Endothelial cell of umbilical vein (primary cell): ENCODE measurements at regions of chr11 and their contacts with region 1.

Region 1: GRCh38 chr11:67317205-67317887 is 14.0 kb downstream of the SSH3 start:
- DNase-seq: peak; percentile 96
- H3K4me3 ChIP-seq: peak overlapping the region; percentile 22 to 75 (median 60)
- H3K27ac ChIP-seq: peak overlapping the region; percentile 34
- H3K4me1 ChIP-seq: peaks cover 6% of the 10 kb centered on the region
- H3K27me3 ChIP-seq: no peaks in the 10 kb centered on the region
- CTCF ChIP-seq: peak; percentile 96 to 97
- POLR2A ChIP-seq: peak; percentile 87

Region 2: GRCh38 chr11:67239783-67240575 is 77.4 kb before region 1 on chr11:
- CTCF ChIA-PET with region 1: interaction called, 18 read pairs
- POLR2A ChIA-PET with region 1: no interaction called
- dilution Hi-C with region 1: no loop called
- intact Hi-C with region 1: no loop called
- DNase-seq: peak; percentile 100
- H3K4me3 ChIP-seq: peak overlapping the region; percentile 78 to 90 (median 81)
- H3K27ac ChIP-seq: peak overlapping the region; percentile 83
- H3K4me1 ChIP-seq: peaks cover 23% of the 10 kb centered on the region
- H3K27me3 ChIP-seq: no peaks in the 10 kb centered on the region
- CTCF ChIP-seq: peak in 1 of 2 donors; percentile 9
- POLR2A ChIP-seq: peak; percentile 99

Region 3: GRCh38 chr11:67265633-67266423 is 51.5 kb before region 1 on chr11:
- CTCF ChIA-PET with region 1: interaction called, 151 read pairs
- POLR2A ChIA-PET with region 1: interaction called, 4 read pairs
- dilution Hi-C with region 1: no loop called
- intact Hi-C with region 1: loop called (anchors 1 kb)
- DNase-seq: peak; percentile 45
- H3K4me3 ChIP-seq: no peak overlapping the region
- H3K27ac ChIP-seq: no peak overlapping the region
- H3K4me1 ChIP-seq: peaks cover 37% of the 10 kb centered on the region
- H3K27me3 ChIP-seq: no peaks in the 10 kb centered on the region
- CTCF ChIP-seq: peak; percentile 62 to 79
- POLR2A ChIP-seq: no peak

Region 4: GRCh38 chr11:67277231-67277961 is 40.0 kb before region 1 on chr11:
- CTCF ChIA-PET with region 1: interaction called, 13 read pairs
- POLR2A ChIA-PET with region 1: interaction called, 4 read pairs
- dilution Hi-C with region 1: no loop called
- intact Hi-C with region 1: loop called (anchors 1 kb)
- DNase-seq: peak; percentile 88
- H3K4me3 ChIP-seq: no peak overlapping the region
- H3K27ac ChIP-seq: peak overlapping the region; percentile 76
- H3K4me1 ChIP-seq: peaks cover 17% of the 10 kb centered on the region
- H3K27me3 ChIP-seq: no peaks in the 10 kb centered on the region
- CTCF ChIP-seq: no peak
- POLR2A ChIP-seq: no peak

Region 5: GRCh38 chr11:67303132-67303834 is 14.1 kb before region 1 on chr11 and contains the start of gene SSH3:
- CTCF ChIA-PET with region 1: interaction called, 18 read pairs
- POLR2A ChIA-PET with region 1: interaction called, 6 read pairs
- dilution Hi-C with region 1: no loop called
- intact Hi-C with region 1: no loop called
- DNase-seq: peak; percentile 55
- H3K4me3 ChIP-seq: peak within 1 kb of the TSS; percentile 62 to 89 (median 74)
- H3K27ac ChIP-seq: no peak within 1 kb of the TSS
- H3K4me1 ChIP-seq: peaks cover 3% of the 10 kb centered on the region
- H3K27me3 ChIP-seq: no peaks in the 10 kb centered on the region
- CTCF ChIP-seq: no peak
- POLR2A ChIP-seq: peak; percentile 51
- total RNA-seq, gene SSH3: 16.5 and 22.5 TPM in 2 replicates

Region 6: DNA sequence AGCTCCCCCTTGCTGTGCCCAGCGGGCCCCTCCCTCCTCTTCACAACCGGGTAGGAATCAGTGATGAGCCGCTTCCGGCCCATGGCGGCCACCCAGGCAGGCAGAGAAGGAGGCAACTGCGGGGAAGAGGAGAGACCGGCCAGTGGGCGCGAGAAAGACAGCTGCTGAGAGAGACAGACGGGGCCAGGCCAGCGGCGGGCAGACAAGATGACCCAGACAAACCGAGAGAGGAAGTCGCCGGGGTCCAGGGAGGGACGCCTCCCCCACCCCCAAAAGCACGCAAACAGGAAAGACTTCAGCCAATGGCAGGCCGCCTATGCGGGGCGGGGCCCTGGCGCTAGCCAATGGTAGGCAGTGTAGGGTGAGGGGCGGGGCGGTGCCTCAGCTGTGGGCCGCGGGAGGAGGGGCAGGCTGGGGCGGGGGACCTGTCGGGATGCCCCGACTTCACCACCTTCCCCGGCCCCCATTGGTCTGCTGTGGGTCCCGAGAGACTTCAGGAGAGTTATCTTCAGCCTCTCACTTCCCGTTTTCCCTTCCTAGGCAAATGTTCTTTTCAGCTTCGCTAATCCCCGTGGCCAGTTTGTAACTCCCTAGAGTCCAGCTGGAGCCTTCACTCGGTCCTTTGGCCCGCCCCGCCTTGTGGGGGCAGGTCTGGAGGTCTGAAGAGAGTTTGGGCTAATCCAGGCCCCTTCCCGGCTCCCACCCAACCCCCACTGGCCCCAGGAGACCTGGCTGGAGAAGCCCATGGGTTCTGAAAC is 36.1 kb after region 1 on chr11 and contains the start of gene POLD4:
- CTCF ChIA-PET with region 1: interaction called, 17 read pairs
- POLR2A ChIA-PET with region 1: no interaction called
- dilution Hi-C with region 1: no loop called
- intact Hi-C with region 1: loop called (anchors 1 kb)
- DNase-seq: peak; percentile 97
- H3K4me3 ChIP-seq: peak within 1 kb of the TSS; percentile 19 to 76 (median 53)
- H3K27ac ChIP-seq: peak within 1 kb of the TSS; percentile 78
- H3K4me1 ChIP-seq: peaks cover 47% of the 10 kb centered on the region
- H3K27me3 ChIP-seq: no peaks in the 10 kb centered on the region
- CTCF ChIP-seq: no peak
- POLR2A ChIP-seq: peak; percentile 95
- total RNA-seq, gene POLD4: 50.1 and 66.9 TPM in 2 replicates

Region 7: DNA sequence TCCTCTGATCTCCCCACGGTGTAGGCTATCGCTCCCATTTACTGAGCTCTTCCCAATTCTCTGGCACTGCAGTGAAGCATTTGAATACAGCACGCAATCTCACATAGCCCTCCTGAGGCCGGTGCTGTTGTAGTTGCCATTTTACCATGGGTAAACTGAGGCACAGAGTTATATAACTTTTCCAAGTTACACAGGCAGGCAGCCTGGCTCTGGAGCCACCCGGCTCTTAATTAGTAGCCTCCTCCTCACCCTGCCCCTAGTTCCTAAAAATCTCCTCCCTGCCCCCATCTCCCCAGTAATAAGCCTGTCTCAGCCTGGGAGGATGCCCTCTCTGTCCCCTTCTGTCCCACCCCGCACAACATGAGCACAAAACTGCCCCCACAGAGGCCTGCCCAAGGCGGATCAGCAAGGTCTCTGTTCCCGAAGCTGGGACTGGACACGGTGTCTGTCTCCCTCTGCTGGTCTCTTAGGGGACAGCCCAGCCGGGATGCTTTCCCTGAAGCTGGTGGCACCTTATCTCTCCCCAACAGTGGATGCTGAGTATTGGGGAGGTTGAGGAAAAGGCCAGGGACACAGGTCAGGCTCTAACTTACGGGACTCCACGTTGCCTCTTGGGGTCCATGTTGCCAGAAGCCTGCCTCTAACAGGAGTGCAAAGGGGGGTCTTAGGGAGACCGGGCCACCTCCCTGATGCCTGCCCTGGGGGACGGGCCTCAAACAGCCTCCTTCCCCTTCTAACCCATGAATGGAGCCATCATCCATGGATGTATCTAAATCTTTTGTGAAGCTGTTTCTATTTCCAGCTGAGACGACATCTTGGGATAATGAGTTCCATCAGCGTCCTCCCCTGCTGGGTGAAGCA is 65.2 kb after region 1 on chr11:
- CTCF ChIA-PET with region 1: interaction called, 83 read pairs
- POLR2A ChIA-PET with region 1: no interaction called
- dilution Hi-C with region 1: no loop called
- intact Hi-C with region 1: loop called (anchors 2 kb)
- DNase-seq: peak; percentile 72
- H3K4me3 ChIP-seq: no peak overlapping the region
- H3K27ac ChIP-seq: no peak overlapping the region
- H3K4me1 ChIP-seq: no peaks in the 10 kb centered on the region
- H3K27me3 ChIP-seq: no peaks in the 10 kb centered on the region
- CTCF ChIP-seq: peak; percentile 97
- POLR2A ChIP-seq: no peak